ENCODE measurements at regions of chr11 and their contacts with region 1.

Region 1: GRCh38 chr11:92941676-92942571 is 27.5 kb upstream of the MTNR1B start:
- DNase-seq: peak; percentile 27
- H3K4me3 Mint-ChIP-seq: no peak overlapping the region
- H3K27ac Mint-ChIP-seq: no peak overlapping the region
- H3K4me1 Mint-ChIP-seq: no peaks in the 10 kb centered on the region
- H3K27me3 Mint-ChIP-seq: peaks cover 22% of the 10 kb centered on the region

Region 2: DNA sequence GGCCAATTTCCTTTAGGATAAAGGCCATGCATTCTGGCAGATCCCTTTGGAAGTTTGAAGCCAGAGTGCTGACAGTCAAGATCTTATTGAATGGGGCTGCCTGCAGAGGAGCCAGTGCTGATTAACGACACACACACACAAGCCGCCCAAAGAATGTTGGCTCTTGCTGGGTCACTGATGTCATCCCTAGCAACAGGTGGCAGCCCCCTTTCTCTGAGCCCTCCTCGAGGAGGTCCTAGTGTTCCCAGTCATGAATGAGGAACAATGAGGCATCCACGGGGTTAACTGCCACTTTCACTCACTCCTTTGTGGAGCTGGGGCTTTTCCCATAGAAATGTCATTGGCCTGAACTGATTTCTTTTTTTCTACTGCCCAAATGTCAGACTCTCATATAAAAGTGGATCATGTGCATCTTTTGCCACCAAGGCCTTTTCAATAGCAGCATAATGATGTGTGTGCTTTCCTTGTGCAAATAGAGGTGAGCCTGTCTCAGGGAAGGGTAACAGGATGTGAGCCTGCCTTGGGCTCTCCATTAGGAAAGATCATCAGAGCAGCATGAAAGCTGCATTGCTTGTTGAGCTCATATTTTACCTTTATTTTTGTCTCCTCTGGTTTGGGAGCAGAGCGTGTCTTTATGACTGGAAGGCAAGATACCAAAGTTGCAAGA is 274.3 kb before region 1 on chr11:
- CTCF ChIA-PET with region 1: no interaction called
- intact Hi-C with region 1: no loop called
- DNase-seq: no peak
- H3K4me3 Mint-ChIP-seq: no peak overlapping the region
- H3K27ac Mint-ChIP-seq: no peak overlapping the region
- H3K4me1 Mint-ChIP-seq: no peaks in the 10 kb centered on the region
- H3K27me3 Mint-ChIP-seq: peaks cover 2% of the 10 kb centered on the region

Region 3: GRCh38 chr11:92954003-92954402 is 12.1 kb after region 1 on chr11:
- CTCF ChIA-PET with region 1: interaction called, 14 read pairs
- intact Hi-C with region 1: no loop called
- DNase-seq: no peak
- H3K4me3 Mint-ChIP-seq: no peak overlapping the region
- H3K27ac Mint-ChIP-seq: no peak overlapping the region
- H3K4me1 Mint-ChIP-seq: no peaks in the 10 kb centered on the region
- H3K27me3 Mint-ChIP-seq: peaks cover 6% of the 10 kb centered on the region

Region 4: GRCh38 chr11:93063100-93063499 is 121.2 kb after region 1 on chr11:
- CTCF ChIA-PET with region 1: interaction called, 4 read pairs
- intact Hi-C with region 1: loop called (anchors 1 kb)
- DNase-seq: no peak
- H3K4me3 Mint-ChIP-seq: no peak overlapping the region
- H3K27ac Mint-ChIP-seq: no peak overlapping the region
- H3K4me1 Mint-ChIP-seq: no peaks in the 10 kb centered on the region
- H3K27me3 Mint-ChIP-seq: peaks cover 35% of the 10 kb centered on the region

Region 5: DNA sequence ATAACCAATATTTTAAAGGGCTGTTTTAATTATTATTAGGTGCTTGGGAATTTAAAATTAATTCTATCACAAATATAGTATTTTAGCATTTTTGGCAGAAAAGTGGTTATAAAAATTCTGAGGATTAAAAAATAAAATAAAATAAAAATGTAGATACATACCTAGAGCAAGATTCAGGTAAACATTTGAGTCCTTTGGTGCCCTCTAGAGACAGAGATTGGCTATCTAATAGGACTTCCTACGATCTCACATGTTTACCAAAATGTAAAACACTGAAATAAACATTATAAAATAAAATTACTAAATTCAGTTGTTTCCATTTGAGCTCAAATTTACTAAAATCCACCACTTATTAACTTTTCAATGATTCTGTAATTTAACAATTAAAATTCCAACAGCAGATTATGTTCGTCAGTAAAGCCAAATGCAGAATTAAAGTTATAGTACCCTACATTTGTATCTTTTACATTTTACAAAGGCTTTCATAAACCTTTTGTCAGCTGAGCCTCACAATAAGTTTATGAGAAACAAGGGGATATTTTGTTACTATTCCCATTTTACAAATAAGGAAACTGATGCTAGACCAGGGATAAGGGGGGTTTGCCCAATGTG is 228.1 kb after region 1 on chr11:
- CTCF ChIA-PET with region 1: interaction called, 3 read pairs
- intact Hi-C with region 1: loop called (anchors 2 kb)
- DNase-seq: no peak
- H3K4me3 Mint-ChIP-seq: no peak overlapping the region
- H3K27ac Mint-ChIP-seq: no peak overlapping the region
- H3K4me1 Mint-ChIP-seq: peaks cover 6% of the 10 kb centered on the region
- H3K27me3 Mint-ChIP-seq: no peaks in the 10 kb centered on the region

Region 6: DNA sequence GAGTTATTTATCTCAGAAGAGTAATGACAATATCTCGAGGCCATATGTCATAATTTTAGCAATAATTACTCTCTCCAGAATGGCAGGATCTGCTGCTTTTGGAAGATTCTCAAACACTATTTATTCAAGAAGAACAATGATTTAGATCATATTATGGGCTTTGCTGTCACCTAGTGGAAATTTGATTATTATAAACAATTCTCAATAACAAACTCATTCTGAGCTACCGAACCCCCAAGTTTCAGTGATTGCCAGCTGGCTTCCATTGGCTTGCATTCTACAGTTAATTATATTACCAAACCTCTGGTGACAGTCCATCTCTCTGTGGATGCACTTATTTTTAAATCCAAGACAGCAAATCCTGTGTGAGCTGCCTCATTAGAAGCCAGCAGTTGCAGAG is 283.7 kb after region 1 on chr11:
- CTCF ChIA-PET with region 1: interaction called, 19 read pairs
- intact Hi-C with region 1: loop called (anchors 1 kb)
- DNase-seq: no peak
- H3K4me3 Mint-ChIP-seq: no peak overlapping the region
- H3K27ac Mint-ChIP-seq: no peak overlapping the region
- H3K4me1 Mint-ChIP-seq: no peaks in the 10 kb centered on the region
- H3K27me3 Mint-ChIP-seq: no peaks in the 10 kb centered on the region

Region 7: GRCh38 chr11:93652161-93652597 is 710.3 kb after region 1 on chr11:
- CTCF ChIA-PET with region 1: interaction called, 3 read pairs
- intact Hi-C with region 1: loop called (anchors 2 kb)
- DNase-seq: peak; percentile 17
- H3K4me3 Mint-ChIP-seq: no peak overlapping the region
- H3K27ac Mint-ChIP-seq: no peak overlapping the region
- H3K4me1 Mint-ChIP-seq: peaks cover 3% of the 10 kb centered on the region
- H3K27me3 Mint-ChIP-seq: no peaks in the 10 kb centered on the region

Measured in activated naive CD4-positive, alpha-beta T cell treated with anti-CD3 and anti-CD28 coated beads for 36 hours (primary cell).